Mammary epithelial cell (primary cell): ENCODE measurements at regions of chr9 and their contacts with region 1.

Region 1: GRCh38 chr9:89000973-89001916 is 10.0 kb downstream of the S1PR3 start:
- DNase-seq: peak; percentile 61
- H3K4me3 ChIP-seq: peak overlapping the region in 1 of 3 experiments; percentile 13
- H3K27ac ChIP-seq: no peak overlapping the region
- H3K4me1 ChIP-seq: peaks cover 4% of the 10 kb centered on the region
- H3K27me3 ChIP-seq: no peaks in the 10 kb centered on the region
- CTCF ChIP-seq: peak; percentile 61 to 80

Region 2: DNA sequence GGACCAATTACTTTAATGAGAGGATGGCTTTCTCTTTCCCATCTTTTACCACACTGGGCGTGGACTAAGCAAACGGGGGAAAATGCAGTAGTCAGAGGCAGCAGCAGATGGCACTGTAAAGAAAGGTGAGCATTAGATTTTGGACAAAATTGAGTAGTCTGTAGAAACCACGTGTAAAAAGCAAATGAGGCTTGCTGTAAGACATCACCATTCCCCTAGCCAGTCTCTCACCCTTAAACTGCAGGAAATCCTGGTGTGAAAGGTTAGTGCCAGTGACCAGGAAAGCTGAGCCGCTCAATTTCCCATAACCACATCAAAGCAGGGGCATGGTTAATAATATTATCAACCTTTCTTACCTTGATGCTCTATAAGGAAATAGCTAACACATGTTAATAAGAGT is 894.8 kb before region 1 on chr9:
- CTCF ChIA-PET with region 1: no interaction called
- dilution Hi-C with region 1: no loop called
- in situ Hi-C with region 1: no loop called
- intact Hi-C with region 1: loop called (anchors 2 kb)
- DNase-seq: peak; percentile 40
- H3K4me3 ChIP-seq: no peak overlapping the region
- H3K27ac ChIP-seq: no peak overlapping the region
- H3K4me1 ChIP-seq: no peaks in the 10 kb centered on the region
- H3K27me3 ChIP-seq: no peaks in the 10 kb centered on the region
- CTCF ChIP-seq: peak; percentile 64 to 73

Region 3: DNA sequence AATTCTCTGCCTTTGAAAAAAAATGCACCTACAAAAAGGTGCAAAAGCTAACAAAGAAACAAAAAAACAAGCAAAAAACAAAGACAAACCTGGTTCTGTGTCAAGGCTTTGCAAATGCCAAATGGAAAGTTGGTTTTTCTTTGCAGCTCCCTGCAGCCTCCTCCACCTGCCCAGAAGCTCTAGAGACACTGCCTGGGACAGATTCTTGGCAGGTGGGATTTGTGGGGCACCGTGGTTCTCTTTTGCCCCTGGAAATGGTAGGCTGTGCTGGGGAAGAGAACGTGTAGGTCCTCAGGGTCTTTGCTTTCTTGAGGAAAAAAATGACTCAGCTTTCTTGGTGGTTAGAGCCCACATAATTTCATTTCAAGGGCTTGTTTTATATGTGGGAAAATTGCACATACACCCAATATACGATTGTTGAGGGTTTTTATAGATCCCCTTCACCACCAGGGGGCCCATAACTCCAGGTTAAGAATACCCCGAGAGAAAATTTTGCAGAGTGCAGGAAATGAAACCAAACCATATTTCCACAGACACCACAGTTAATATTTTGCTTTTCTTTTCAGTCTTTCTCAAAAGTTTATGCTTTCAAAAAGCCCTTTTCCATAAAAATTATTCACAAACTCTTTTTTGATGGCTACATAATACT is 407.6 kb before region 1 on chr9:
- CTCF ChIA-PET with region 1: no interaction called
- dilution Hi-C with region 1: no loop called
- in situ Hi-C with region 1: loop called (anchors 5 to 10 kb)
- intact Hi-C with region 1: loop called (anchors 1 kb)
- DNase-seq: peak; percentile 28
- H3K4me3 ChIP-seq: no peak overlapping the region
- H3K27ac ChIP-seq: no peak overlapping the region
- H3K4me1 ChIP-seq: no peaks in the 10 kb centered on the region
- H3K27me3 ChIP-seq: peaks cover 4% of the 10 kb centered on the region
- CTCF ChIP-seq: peak; percentile 58 to 64

Region 4: GRCh38 chr9:88660611-88661010 is 340.6 kb before region 1 on chr9:
- CTCF ChIA-PET with region 1: no interaction called
- dilution Hi-C with region 1: no loop called
- in situ Hi-C with region 1: loop called in 1 of 2 experiments (anchors 5 kb)
- intact Hi-C with region 1: loop called (anchors 1 kb)
- DNase-seq: peak; percentile 50
- H3K4me3 ChIP-seq: no peak overlapping the region
- H3K27ac ChIP-seq: no peak overlapping the region
- H3K4me1 ChIP-seq: peaks cover 9% of the 10 kb centered on the region
- H3K27me3 ChIP-seq: no peaks in the 10 kb centered on the region
- CTCF ChIP-seq: peak; percentile 68 to 72

Region 5: DNA sequence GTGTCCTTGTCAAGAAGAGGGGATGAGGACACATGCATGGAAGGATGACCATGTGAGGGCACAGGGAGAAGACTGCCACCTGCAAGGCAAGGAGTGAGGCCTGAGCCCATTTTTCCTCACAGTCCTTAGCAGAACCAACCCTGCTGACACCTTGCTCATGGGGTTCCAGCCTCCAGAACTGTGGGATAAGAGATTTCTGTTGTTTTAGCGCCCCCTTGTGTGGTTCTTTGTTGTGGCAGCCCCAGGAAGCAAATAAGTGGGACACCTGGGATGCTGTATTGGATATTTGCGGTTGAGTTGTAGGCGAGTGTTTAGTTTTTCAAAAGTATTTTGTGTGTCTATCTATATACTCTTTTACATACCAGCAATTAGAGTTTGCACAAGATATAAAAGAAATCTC is 259.9 kb before region 1 on chr9:
- CTCF ChIA-PET with region 1: no interaction called
- dilution Hi-C with region 1: no loop called
- in situ Hi-C with region 1: no loop called
- intact Hi-C with region 1: loop called (anchors 5 kb)
- DNase-seq: no peak
- H3K4me3 ChIP-seq: no peak overlapping the region
- H3K27ac ChIP-seq: no peak overlapping the region
- H3K4me1 ChIP-seq: no peaks in the 10 kb centered on the region
- H3K27me3 ChIP-seq: no peaks in the 10 kb centered on the region
- CTCF ChIP-seq: peak in 1 of 2 donors; percentile 16

Region 6: GRCh38 chr9:88905506-88905905 is 95.7 kb before region 1 on chr9:
- CTCF ChIA-PET with region 1: no interaction called
- dilution Hi-C with region 1: no loop called
- in situ Hi-C with region 1: no loop called
- intact Hi-C with region 1: no loop called
- DNase-seq: no peak
- H3K4me3 ChIP-seq: no peak overlapping the region
- H3K27ac ChIP-seq: no peak overlapping the region
- H3K4me1 ChIP-seq: no peaks in the 10 kb centered on the region
- H3K27me3 ChIP-seq: no peaks in the 10 kb centered on the region
- CTCF ChIP-seq: no peak

Region 7: GRCh38 chr9:89097219-89097618 is 96.0 kb after region 1 on chr9:
- CTCF ChIA-PET with region 1: no interaction called
- dilution Hi-C with region 1: no loop called
- in situ Hi-C with region 1: no loop called
- intact Hi-C with region 1: no loop called
- DNase-seq: no peak
- H3K4me3 ChIP-seq: no peak overlapping the region
- H3K27ac ChIP-seq: no peak overlapping the region
- H3K4me1 ChIP-seq: no peaks in the 10 kb centered on the region
- H3K27me3 ChIP-seq: peaks cover 2% of the 10 kb centered on the region
- CTCF ChIP-seq: no peak

Region 8: DNA sequence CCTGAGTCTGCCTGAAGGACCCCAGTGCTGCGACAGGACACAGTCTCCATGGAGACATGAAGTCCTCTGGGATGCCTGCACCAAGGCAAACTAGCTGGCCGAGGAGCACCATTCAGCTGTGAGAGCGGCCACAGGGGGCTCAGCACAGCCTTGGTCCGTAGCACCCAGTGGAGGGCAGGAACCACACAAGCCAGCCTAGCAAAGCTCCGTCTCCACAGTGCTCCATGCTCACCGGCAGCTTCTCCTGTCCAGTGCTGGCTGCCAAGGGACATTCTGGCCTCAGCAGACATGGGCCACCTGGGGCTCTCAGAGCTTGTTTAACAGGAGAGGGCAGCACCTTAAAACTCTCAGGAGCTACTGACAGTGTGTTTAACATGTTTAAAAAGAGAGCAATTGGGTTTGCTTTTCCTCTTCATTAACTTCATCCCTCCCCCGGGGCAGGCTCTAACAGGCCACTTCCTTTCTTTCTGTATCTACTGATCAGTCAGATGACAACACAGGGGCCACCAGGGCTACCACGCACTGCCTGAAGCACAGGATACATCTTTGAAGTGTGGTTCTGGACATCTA is 374.0 kb after region 1 on chr9:
- CTCF ChIA-PET with region 1: no interaction called
- dilution Hi-C with region 1: no loop called
- in situ Hi-C with region 1: no loop called
- intact Hi-C with region 1: no loop called
- DNase-seq: no peak
- H3K4me3 ChIP-seq: no peak overlapping the region
- H3K27ac ChIP-seq: no peak overlapping the region
- H3K4me1 ChIP-seq: peaks cover 3% of the 10 kb centered on the region
- H3K27me3 ChIP-seq: no peaks in the 10 kb centered on the region
- CTCF ChIP-seq: peak in 1 of 2 donors; percentile 24

Region 9: DNA sequence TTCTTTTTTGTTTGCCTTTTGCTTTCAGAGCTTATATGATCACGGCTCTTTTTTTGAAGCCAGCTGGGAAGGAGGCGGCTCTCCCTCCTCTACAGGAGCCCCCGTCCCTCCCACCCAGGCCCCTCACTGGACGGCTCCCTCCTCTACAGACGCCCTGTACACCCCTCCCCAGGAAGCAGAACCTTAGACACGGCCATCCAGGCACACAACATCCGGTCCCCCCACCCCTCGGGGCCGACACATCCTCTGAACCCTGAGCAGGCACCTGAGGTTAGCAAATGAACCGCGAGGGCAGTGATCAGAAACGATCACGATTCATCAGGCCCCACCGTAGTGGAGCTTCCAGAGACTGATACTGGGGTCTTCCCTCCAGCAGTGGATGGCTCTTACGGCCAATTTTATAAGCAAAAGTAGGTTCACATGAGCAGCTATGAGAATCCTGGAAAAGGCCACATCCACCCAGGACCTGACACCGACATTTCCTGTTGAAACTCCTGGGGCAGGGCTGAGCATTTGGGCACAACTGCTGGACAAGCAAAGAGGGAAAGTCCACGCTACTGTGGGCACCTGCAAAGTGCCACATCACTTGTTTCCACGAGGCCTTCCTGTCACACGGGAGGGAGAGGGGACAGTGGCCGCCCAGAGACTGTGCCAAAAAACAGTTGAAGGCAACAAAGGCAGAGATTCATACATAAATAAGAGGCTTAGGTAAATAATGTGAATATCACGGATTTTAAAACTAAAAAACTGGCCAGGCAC is 417.8 kb after region 1 on chr9:
- CTCF ChIA-PET with region 1: no interaction called
- dilution Hi-C with region 1: no loop called
- in situ Hi-C with region 1: no loop called
- intact Hi-C with region 1: no loop called
- DNase-seq: no peak
- H3K4me3 ChIP-seq: no peak overlapping the region
- H3K27ac ChIP-seq: no peak overlapping the region
- H3K4me1 ChIP-seq: no peaks in the 10 kb centered on the region
- H3K27me3 ChIP-seq: no peaks in the 10 kb centered on the region
- CTCF ChIP-seq: no peak